Breast epithelium (tissue), 4 donors: ENCODE measurements at regions of chr1 and their contacts with region 1.

Region 1: GRCh38 chr1:209095627-209096595 is 487.6 kb upstream of the CAMK1G start:
- DNase-seq: no peak
- H3K4me3 ChIP-seq: no peak overlapping the region
- H3K27ac ChIP-seq: no peak overlapping the region
- H3K4me1 ChIP-seq: no peaks in the 10 kb centered on the region
- H3K27me3 ChIP-seq: no peaks in the 10 kb centered on the region
- CTCF ChIP-seq: no peak
- POLR2A ChIP-seq: no peak

Region 2: DNA sequence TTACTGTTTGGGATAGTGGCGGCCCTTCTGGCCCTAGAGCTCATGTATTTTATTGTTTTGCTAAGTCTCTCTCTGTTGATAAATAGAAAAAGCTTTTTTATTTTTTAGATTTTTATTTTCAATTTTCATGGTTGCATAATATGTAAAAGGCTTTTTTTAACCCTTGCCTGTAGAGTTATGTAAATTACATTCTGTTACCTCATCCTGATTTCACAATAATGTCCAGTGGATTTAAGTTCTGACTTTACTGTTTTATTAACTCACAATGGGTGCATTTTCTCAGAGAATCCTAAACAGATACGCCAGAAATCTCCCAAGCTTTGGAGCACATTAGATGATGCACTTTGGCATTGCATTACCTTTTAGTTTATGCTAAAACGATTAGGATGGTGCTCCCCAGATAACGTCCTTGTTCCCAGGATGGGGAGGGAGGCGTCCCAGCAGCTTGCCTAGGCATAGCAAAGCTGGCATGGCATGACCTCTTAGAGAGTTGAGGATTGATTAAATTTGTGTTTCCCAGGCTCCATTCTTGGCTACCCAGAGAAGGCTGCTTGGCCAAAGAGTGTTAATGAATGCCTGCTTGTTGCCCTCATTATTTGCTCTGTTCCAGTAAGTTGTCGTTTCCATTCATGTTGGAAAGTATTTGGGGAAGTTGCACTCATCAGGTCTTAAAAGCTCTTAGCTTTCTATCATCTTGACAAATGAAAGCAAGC is 748.9 kb after region 1 on chr1:
- intact Hi-C with region 1: loop called (anchors 5 kb)
- DNase-seq: no peak
- H3K4me3 ChIP-seq: no peak overlapping the region
- H3K27ac ChIP-seq: no peak overlapping the region
- H3K4me1 ChIP-seq: no peaks in the 10 kb centered on the region
- H3K27me3 ChIP-seq: no peaks in the 10 kb centered on the region
- CTCF ChIP-seq: no peak
- POLR2A ChIP-seq: no peak